ENCODE measurements at regions of chr1 and their contacts with region 1.

Region 1: GRCh38 chr1:171702598-171702997 is 39.3 kb downstream of the VAMP4 start:
- DNase-seq: no peak
- H3K4me3 ChIP-seq: no peak overlapping the region
- H3K27ac ChIP-seq: no peak overlapping the region
- H3K4me1 ChIP-seq: peaks cover 7% of the 10 kb centered on the region
- H3K27me3 ChIP-seq: no peaks in the 10 kb centered on the region
- CTCF ChIP-seq: no peak

Region 2: GRCh38 chr1:170375082-170375723 is 1327.4 kb before region 1 on chr1:
- CTCF ChIA-PET with region 1: no interaction called
- POLR2A ChIA-PET with region 1: no interaction called
- intact Hi-C with region 1: no loop called
- DNase-seq: no peak
- H3K4me3 ChIP-seq: no peak overlapping the region
- H3K27ac ChIP-seq: no peak overlapping the region
- H3K4me1 ChIP-seq: no peaks in the 10 kb centered on the region
- H3K27me3 ChIP-seq: no peaks in the 10 kb centered on the region
- CTCF ChIP-seq: no peak

Region 3: DNA sequence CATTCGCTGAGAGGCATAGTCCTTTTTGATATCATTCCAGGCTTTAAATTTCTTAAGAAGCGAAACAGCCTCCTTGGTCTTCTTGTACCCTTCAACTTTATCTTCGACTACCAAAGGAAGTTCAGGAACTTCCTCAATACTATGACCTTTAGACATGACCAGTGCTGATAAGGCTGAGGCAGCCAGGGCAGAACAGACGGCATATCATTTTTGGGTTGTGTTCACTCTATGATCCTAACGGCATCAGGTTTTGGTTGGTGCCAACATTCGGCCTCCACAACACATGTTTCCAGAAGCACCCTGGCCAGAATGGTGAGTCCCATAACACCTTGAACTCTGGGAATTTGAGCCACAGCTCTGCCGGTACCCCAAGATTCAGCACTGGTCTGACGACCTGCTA is 18.7 kb before region 1 on chr1:
- CTCF ChIA-PET with region 1: no interaction called
- POLR2A ChIA-PET with region 1: no interaction called
- intact Hi-C with region 1: loop called (anchors 2 kb)
- DNase-seq: no peak
- H3K4me3 ChIP-seq: no peak overlapping the region
- H3K27ac ChIP-seq: no peak overlapping the region
- H3K4me1 ChIP-seq: no peaks in the 10 kb centered on the region
- H3K27me3 ChIP-seq: no peaks in the 10 kb centered on the region
- CTCF ChIP-seq: no peak

Region 4: DNA sequence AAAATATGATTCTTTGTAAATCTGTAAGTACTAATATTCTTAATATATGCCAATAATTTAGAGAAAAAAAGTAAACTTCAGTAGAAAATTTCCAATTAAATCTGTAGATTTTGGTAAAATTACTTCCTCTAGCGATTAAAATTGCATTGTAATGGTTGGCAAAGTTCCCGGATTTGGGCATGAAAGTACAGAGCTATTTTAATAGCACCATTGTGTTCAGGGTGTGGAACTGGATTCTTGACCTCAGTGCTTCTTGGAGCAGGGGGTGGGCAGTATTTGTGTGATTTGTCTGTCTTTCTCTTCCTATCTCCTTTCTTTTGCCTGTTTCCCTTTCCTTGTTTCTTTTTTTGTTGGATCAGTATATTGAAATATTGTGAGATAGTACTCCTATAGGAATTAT is 210.8 kb after region 1 on chr1:
- CTCF ChIA-PET with region 1: no interaction called
- POLR2A ChIA-PET with region 1: no interaction called
- intact Hi-C with region 1: no loop called
- DNase-seq: peak; percentile 69
- H3K4me3 ChIP-seq: no peak overlapping the region
- H3K27ac ChIP-seq: no peak overlapping the region
- H3K4me1 ChIP-seq: peaks cover 25% of the 10 kb centered on the region
- H3K27me3 ChIP-seq: no peaks in the 10 kb centered on the region
- CTCF ChIP-seq: no peak

Measured in A673 (cell line).